Panc1 (cell line): ENCODE measurements at regions of chr1 and their contacts with region 1.

Region 1: DNA sequence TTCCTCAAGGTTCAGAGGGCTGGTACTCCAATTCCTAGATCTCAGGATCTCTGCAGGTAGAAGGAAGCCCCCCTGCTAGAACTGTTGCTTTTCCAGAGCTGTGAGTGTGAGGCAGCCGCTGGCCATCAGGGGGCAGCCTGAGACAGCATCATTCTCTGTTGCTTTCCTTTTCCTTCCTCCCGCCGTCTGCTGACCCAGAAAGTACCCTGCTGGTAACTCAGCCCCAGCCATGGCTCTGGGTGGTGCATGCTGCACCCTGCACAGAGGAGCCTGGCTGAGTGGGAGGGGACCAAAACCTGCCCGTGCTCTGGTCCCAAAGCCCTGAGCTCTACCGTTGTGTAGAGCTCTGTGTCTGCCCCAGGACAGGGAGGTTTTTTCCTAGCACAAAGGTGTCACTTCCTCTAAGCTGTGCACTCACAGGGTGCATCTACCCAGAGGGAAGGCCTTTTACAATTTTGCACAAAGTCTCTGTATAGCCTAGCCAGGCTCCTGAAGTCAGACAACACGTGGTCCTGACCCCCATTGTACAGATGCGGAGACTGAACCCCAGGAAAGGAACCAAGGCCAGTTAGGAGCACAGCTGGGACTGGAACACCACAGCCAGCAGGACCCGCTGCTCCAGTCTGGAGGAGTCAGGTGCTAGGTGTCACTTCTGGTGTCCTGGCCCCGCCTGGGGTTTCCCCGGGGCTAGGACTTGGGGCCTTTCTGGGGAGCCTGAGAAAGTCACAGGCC is 5.6 kb upstream of the FAM131C start:
- DNase-seq: peak; percentile 71
- ATAC-seq: peak; percentile 79
- H3K4me3 ChIP-seq: no peak overlapping the region
- H3K27ac ChIP-seq: peak overlapping the region; percentile 74
- H3K4me1 ChIP-seq: peaks cover 47% of the 10 kb centered on the region
- H3K27me3 ChIP-seq: no peaks in the 10 kb centered on the region
- CTCF ChIP-seq: peak; percentile 92

Region 2: GRCh38 chr1:15610167-15610566 is 468.9 kb before region 1 on chr1:
- CTCF ChIA-PET with region 1: no interaction called
- POLR2A ChIA-PET with region 1: no interaction called
- in situ Hi-C with region 1: no loop called
- intact Hi-C with region 1: no loop called
- DNase-seq: no peak
- ATAC-seq: 0 out of 2 replicates have a peak, but pooled peaks have one; percentile 47
- H3K4me3 ChIP-seq: no peak overlapping the region
- H3K27ac ChIP-seq: no peak overlapping the region
- H3K4me1 ChIP-seq: no peaks in the 10 kb centered on the region
- H3K27me3 ChIP-seq: no peaks in the 10 kb centered on the region
- CTCF ChIP-seq: no peak

Region 3: GRCh38 chr1:15876357-15877055 is 202.6 kb before region 1 on chr1:
- CTCF ChIA-PET with region 1: no interaction called
- POLR2A ChIA-PET with region 1: no interaction called
- in situ Hi-C with region 1: no loop called
- intact Hi-C with region 1: no loop called
- DNase-seq: no peak
- ATAC-seq: peak; percentile 78
- H3K4me3 ChIP-seq: no peak overlapping the region
- H3K27ac ChIP-seq: no peak overlapping the region
- H3K4me1 ChIP-seq: no peaks in the 10 kb centered on the region
- H3K27me3 ChIP-seq: no peaks in the 10 kb centered on the region
- CTCF ChIP-seq: no peak

Region 4: GRCh38 chr1:16122916-16123315 is 43.8 kb after region 1 on chr1:
- CTCF ChIA-PET with region 1: interaction called, 11 read pairs
- POLR2A ChIA-PET with region 1: interaction called, 6 read pairs
- in situ Hi-C with region 1: no loop called
- intact Hi-C with region 1: loop called (anchors 2 kb)
- DNase-seq: no peak
- ATAC-seq: peak; percentile 4
- H3K4me3 ChIP-seq: no peak overlapping the region
- H3K27ac ChIP-seq: peak overlapping the region; percentile 83
- H3K4me1 ChIP-seq: peaks cover 83% of the 10 kb centered on the region
- H3K27me3 ChIP-seq: no peaks in the 10 kb centered on the region
- CTCF ChIP-seq: no peak

Region 5: GRCh38 chr1:16187748-16188401 is 108.8 kb after region 1 on chr1:
- CTCF ChIA-PET with region 1: interaction called, 25 read pairs
- POLR2A ChIA-PET with region 1: interaction called, 4 read pairs
- in situ Hi-C with region 1: no loop called
- intact Hi-C with region 1: loop called (anchors 1 kb)
- DNase-seq: peak; percentile 86
- ATAC-seq: peak; percentile 81
- H3K4me3 ChIP-seq: no peak overlapping the region
- H3K27ac ChIP-seq: peak overlapping the region; percentile 85
- H3K4me1 ChIP-seq: peaks cover 68% of the 10 kb centered on the region
- H3K27me3 ChIP-seq: no peaks in the 10 kb centered on the region
- CTCF ChIP-seq: peak; percentile 98

Region 6: GRCh38 chr1:16366722-16367257 is 287.7 kb after region 1 on chr1 and contains the start of gene SZRD1:
- CTCF ChIA-PET with region 1: interaction called, 4 read pairs
- POLR2A ChIA-PET with region 1: no interaction called
- in situ Hi-C with region 1: no loop called
- intact Hi-C with region 1: loop called (anchors 5 kb)
- DNase-seq: peak; percentile 99
- ATAC-seq: peak; percentile 93
- H3K4me3 ChIP-seq: peak within 1 kb of the TSS; percentile 84 to 96
- H3K27ac ChIP-seq: peak within 1 kb of the TSS; percentile 95
- H3K4me1 ChIP-seq: peaks cover 20% of the 10 kb centered on the region
- H3K27me3 ChIP-seq: no peaks in the 10 kb centered on the region
- CTCF ChIP-seq: no peak
- total RNA-seq, gene SZRD1: 175 TPM